ENCODE measurements at regions of chr2 and their contacts with region 1.

Region 1: GRCh38 chr2:113361051-113361450 is 76.4 kb upstream of the ZNG1B start:
- DNase-seq: no peak
- H3K4me3 ChIP-seq: no peak overlapping the region
- H3K27ac ChIP-seq: no peak overlapping the region
- H3K4me1 ChIP-seq: no peaks in the 10 kb centered on the region
- H3K27me3 ChIP-seq: no peaks in the 10 kb centered on the region
- CTCF ChIP-seq: no peak
- EP300 ChIP-seq: no peak
- POLR2A ChIP-seq: no peak

Region 2: GRCh38 chr2:113138428-113139322 is 222.4 kb before region 1 on chr2:
- intact Hi-C with region 1: loop called in 1 of 4 experiments (anchors 10 kb)
- DNase-seq: peak in 1 of 5 donors; percentile 27
- H3K4me3 ChIP-seq: no peak overlapping the region
- H3K27ac ChIP-seq: no peak overlapping the region
- H3K4me1 ChIP-seq: no peaks in the 10 kb centered on the region
- H3K27me3 ChIP-seq: no peaks in the 10 kb centered on the region
- CTCF ChIP-seq: peak; percentile 17 to 57 (median 28)
- EP300 ChIP-seq: no peak
- POLR2A ChIP-seq: no peak

Region 3: GRCh38 chr2:113148606-113149560 is 212.2 kb before region 1 on chr2:
- intact Hi-C with region 1: no loop called
- DNase-seq: no peak
- H3K4me3 ChIP-seq: no peak overlapping the region
- H3K27ac ChIP-seq: no peak overlapping the region
- H3K4me1 ChIP-seq: no peaks in the 10 kb centered on the region
- H3K27me3 ChIP-seq: no peaks in the 10 kb centered on the region
- CTCF ChIP-seq: no peak
- EP300 ChIP-seq: no peak
- POLR2A ChIP-seq: no peak

Region 4: DNA sequence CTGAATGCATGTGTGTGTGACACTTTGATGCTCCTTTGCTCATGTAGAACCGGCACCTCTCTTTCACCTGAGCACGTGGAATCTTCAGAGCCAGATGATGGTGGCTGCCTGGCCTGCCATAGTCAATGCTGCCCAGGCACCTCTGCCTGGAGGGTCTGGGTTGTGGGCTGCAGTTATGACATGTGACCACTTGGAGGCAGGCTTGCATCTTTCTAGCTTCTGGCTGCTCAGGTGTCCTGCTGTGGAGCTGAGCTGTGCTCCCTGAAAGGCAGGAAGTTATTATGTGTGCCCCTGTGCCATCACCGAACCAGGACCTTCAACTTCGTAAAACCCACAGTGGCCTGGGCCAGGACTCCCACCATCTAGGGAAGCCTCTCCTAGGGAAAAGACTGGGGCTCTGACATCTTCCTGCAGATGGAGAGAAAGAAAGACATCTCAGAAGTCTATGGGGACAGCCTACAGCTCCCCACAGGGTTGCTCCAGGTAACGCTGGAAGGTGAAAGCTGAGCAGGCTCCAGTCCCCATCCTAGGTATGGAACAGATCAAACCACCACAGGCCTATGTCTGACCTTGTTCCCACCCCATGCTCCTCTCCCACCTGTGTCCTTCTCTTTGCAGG is 157.0 kb before region 1 on chr2:
- intact Hi-C with region 1: loop called in 1 of 4 experiments (anchors 10 kb)
- DNase-seq: peak; percentile 37 to 69 (median 58)
- H3K4me3 ChIP-seq: no peak overlapping the region
- H3K27ac ChIP-seq: no peak overlapping the region
- H3K4me1 ChIP-seq: no peaks in the 10 kb centered on the region
- H3K27me3 ChIP-seq: no peaks in the 10 kb centered on the region
- CTCF ChIP-seq: peak in 2 of 3 donors; percentile 20 to 64
- EP300 ChIP-seq: no peak
- POLR2A ChIP-seq: no peak

Region 5: DNA sequence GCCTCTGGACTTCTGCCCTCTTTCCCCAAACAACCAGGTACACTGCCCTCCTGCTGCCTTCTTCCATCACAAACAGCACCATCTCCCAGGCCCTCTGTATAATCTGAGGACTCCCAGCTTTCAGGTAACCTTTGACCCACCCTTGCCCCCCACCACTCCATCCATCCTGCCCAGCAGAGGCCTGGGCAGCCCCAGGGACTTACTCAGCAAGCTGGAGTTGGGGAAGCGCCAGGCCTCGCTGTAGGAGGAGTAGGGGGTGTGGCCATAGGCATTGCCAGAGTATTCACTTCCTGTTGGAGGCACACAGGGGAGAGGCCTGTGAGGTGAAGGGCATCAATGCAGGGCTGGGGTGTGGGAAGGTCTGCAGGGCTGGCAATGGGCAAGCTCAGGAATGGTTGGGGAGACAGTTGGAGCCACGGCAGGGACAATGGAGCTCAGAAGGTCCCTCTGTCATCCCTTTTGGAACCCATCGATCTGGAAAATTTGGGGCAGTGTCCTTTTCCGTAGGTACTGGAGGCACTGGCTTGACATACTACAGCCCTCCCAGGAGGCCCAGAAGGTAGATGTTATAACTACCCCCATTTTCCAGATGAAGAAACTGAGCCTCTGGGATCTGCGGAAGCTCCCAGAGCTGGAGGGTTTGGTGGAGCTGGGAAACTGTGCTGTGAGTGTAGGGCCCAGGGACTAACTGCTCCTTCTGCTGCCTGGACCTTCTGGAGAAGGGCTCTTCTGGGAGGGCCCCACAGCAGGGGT is 141.0 kb before region 1 on chr2:
- intact Hi-C with region 1: loop called in 1 of 4 experiments (anchors 10 kb)
- DNase-seq: no peak
- H3K4me3 ChIP-seq: no peak overlapping the region
- H3K27ac ChIP-seq: no peak overlapping the region
- H3K4me1 ChIP-seq: peaks cover 3% of the 10 kb centered on the region
- H3K27me3 ChIP-seq: no peaks in the 10 kb centered on the region
- CTCF ChIP-seq: no peak
- EP300 ChIP-seq: no peak
- POLR2A ChIP-seq: no peak

Region 6: GRCh38 chr2:113240150-113240862 is 120.7 kb before region 1 on chr2:
- intact Hi-C with region 1: no loop called
- DNase-seq: peak; percentile 64 to 86 (median 67)
- H3K4me3 ChIP-seq: no peak overlapping the region
- H3K27ac ChIP-seq: no peak overlapping the region
- H3K4me1 ChIP-seq: peaks cover 11% of the 10 kb centered on the region
- H3K27me3 ChIP-seq: no peaks in the 10 kb centered on the region
- CTCF ChIP-seq: no peak
- EP300 ChIP-seq: peak; percentile 15
- POLR2A ChIP-seq: no peak